ENCODE measurements at regions of chr3 and their contacts with region 1.

Region 1: DNA sequence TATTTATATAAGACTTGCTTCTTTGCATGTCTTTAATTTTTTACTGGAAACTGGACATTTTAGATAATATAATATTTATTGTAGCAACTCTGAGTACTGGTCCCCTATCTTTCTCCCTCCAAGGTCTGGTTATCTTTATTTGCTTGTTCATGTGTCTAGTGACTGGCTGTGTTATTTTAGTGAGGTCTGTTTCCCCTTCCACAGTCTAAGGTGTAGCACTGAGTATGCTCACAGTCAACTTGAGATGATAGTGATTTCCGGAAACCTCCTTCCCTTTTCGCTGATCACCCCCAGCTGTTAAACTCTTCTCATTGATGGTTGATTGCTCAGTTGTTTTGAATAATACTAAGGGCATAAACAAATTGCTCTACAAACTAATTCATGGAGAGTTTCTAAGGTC is 37.0 kb downstream of the PCNP start:
- DNase-seq: no peak
- ATAC-seq: no peak
- H3K4me3 ChIP-seq: no peak overlapping the region
- H3K27ac ChIP-seq: no peak overlapping the region
- H3K4me1 ChIP-seq: no peaks in the 10 kb centered on the region
- H3K27me3 ChIP-seq: no peaks in the 10 kb centered on the region
- CTCF ChIP-seq: no peak

Region 2: DNA sequence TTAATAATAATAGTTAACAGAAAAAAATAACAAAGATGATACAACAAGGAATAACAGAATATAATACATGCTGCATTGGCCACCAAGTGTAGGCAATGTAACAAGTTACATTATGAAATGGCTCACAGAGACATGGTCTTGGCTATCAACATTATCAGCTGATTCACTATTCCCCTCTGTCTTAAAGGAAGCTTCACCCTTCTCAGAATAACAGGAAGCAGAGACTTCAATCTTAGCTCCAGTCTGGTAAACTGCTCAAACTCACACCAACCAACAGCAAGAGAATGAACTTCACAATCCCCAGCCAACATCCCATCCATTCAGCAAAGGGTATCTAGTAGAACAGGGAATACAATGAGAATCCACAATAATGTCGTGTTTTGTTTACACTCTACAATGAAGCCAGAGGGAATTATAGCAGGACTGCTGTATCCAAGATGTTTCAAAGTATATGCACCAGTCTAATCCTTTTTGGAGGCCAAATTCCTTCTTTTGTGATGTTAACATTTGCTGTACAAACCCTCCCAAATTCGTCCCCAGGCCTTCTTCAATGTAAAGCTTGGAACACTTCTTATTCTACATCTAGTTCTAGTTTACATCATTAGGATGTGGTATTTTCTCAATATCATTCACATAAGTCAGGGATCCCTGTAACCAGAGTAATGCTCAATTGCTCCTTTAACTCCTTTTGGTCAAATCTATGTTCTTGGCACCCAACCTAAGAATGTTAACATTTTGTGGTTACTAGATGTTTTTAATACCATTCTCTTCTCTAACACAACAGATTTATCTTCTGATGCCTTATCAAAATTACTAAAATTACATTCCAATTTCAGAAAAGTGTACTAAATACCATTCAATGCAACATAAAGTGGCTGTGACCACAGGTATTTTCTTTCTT is 1845.7 kb before region 1 on chr3:
- CTCF ChIA-PET with region 1: no interaction called
- POLR2A ChIA-PET with region 1: interaction called, 10 read pairs
- in situ Hi-C with region 1: no loop called
- intact Hi-C with region 1: no loop called
- DNase-seq: no peak
- ATAC-seq: no peak
- H3K4me3 ChIP-seq: no peak overlapping the region
- H3K27ac ChIP-seq: no peak overlapping the region
- H3K4me1 ChIP-seq: no peaks in the 10 kb centered on the region
- H3K27me3 ChIP-seq: peaks cover 5% of the 10 kb centered on the region; the same call in 1 of the 2 replicates
- CTCF ChIP-seq: no peak

Region 3: GRCh38 chr3:101591071-101591470 is 20.0 kb before region 1 on chr3:
- CTCF ChIA-PET with region 1: no interaction called
- POLR2A ChIA-PET with region 1: interaction called, 16 read pairs
- in situ Hi-C with region 1: no loop called
- intact Hi-C with region 1: no loop called
- DNase-seq: no peak
- ATAC-seq: no peak
- H3K4me3 ChIP-seq: no peak overlapping the region
- H3K27ac ChIP-seq: no peak overlapping the region
- H3K4me1 ChIP-seq: no peaks in the 10 kb centered on the region
- H3K27me3 ChIP-seq: no peaks in the 10 kb centered on the region
- CTCF ChIP-seq: no peak

Measured in Panc1 (cell line).